HepG2 (cell line): ENCODE measurements at regions of chr10 and their contacts with region 1.

Region 1: GRCh38 chr10:26269754-26270153 is 53.2 kb downstream of the GAD2 start:
- DNase-seq: peak; percentile 38
- ATAC-seq: peak; percentile 88
- H3K4me3 ChIP-seq: no peak overlapping the region
- H3K27ac ChIP-seq: no peak overlapping the region
- H3K4me1 ChIP-seq: no peaks in the 10 kb centered on the region
- H3K27me3 ChIP-seq: peaks cover 0 to 3% of the 10 kb centered on the region in 2 experiments; a peak in 1 of 5 replicates
- CTCF ChIP-seq: peak; percentile 65
- EP300 ChIP-seq: no peak
- POLR2A ChIP-seq: no peak
- RAD21 ChIP-seq: 0 out of 2 replicates have a peak, but pooled peaks have one; percentile 16

Region 2: DNA sequence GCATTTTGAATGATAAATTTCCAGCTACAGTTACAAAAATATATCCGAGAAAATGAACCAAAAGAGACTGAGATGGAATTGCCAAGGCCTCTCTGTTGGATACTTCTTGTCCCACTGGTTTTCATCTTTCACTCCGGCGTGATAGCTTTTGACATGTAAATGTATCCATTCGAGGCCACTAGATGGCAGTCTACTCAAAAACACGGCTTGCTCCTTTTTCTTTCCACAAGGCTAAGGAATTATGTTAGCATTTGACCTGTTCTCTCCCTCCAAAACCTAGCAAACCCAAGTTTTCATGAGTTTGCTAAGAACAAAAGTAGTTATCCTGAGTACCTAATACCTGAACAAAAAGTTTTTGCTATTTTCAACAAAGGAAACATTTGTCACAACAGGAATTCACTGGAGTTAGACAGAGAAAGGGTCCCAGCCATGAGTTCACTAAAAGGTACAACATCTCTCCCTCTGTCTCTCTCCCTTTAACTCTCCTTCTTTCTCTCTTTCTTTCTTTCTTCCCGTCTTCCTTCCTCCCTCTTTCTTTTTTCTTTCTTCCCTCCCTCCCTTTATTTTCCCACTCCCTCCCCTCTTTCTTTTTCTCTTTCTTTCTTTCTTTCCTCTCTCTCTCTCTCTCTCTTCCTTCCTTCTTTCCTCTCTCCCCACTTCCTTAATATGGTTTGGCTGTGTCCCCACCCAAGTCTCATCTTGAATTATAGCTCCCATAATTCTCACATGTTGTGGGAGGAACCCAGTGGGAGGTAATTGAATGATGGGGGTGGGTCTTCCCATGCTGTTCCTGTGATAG is 543.6 kb before region 1 on chr10:
- CTCF ChIA-PET with region 1: interaction called, 4 read pairs
- POLR2A ChIA-PET with region 1: no interaction called
- in situ Hi-C with region 1: loop called (anchors 25 kb)
- intact Hi-C with region 1: no loop called
- DNase-seq: peak; percentile 47
- ATAC-seq: peak; percentile 72
- H3K4me3 ChIP-seq: no peak overlapping the region
- H3K27ac ChIP-seq: no peak overlapping the region
- H3K4me1 ChIP-seq: no peaks in the 10 kb centered on the region
- H3K27me3 ChIP-seq: peaks cover 0 to 1% of the 10 kb centered on the region in 2 experiments; a peak in 2 of 5 replicates
- CTCF ChIP-seq: peak; percentile 70
- EP300 ChIP-seq: no peak
- POLR2A ChIP-seq: no peak
- RAD21 ChIP-seq: no peak

Region 3: GRCh38 chr10:25869609-25870008 is 400.1 kb before region 1 on chr10:
- CTCF ChIA-PET with region 1: no interaction called
- POLR2A ChIA-PET with region 1: no interaction called
- in situ Hi-C with region 1: loop called (anchors 5 kb)
- intact Hi-C with region 1: no loop called
- DNase-seq: no peak
- ATAC-seq: no peak
- H3K4me3 ChIP-seq: no peak overlapping the region
- H3K27ac ChIP-seq: no peak overlapping the region
- H3K4me1 ChIP-seq: no peaks in the 10 kb centered on the region
- H3K27me3 ChIP-seq: no peaks in the 10 kb centered on the region; a peak in 1 of 5 replicates
- CTCF ChIP-seq: no peak
- EP300 ChIP-seq: no peak
- POLR2A ChIP-seq: no peak
- RAD21 ChIP-seq: no peak

Region 4: GRCh38 chr10:25875556-25876165 is 394.1 kb before region 1 on chr10:
- CTCF ChIA-PET with region 1: interaction called, 10 read pairs
- POLR2A ChIA-PET with region 1: no interaction called
- in situ Hi-C with region 1: loop called (anchors 5 kb)
- intact Hi-C with region 1: no loop called
- DNase-seq: peak; percentile 60
- ATAC-seq: peak; percentile 83
- H3K4me3 ChIP-seq: no peak overlapping the region
- H3K27ac ChIP-seq: no peak overlapping the region
- H3K4me1 ChIP-seq: no peaks in the 10 kb centered on the region
- H3K27me3 ChIP-seq: no peaks in the 10 kb centered on the region
- CTCF ChIP-seq: peak; percentile 80
- EP300 ChIP-seq: no peak
- POLR2A ChIP-seq: no peak
- RAD21 ChIP-seq: peak; percentile 27; the same call in 1 of the 2 replicates